CD8-positive, alpha-beta memory T cell (primary cell): ENCODE measurements at regions of chr1 and their contacts with region 1.

Region 1: GRCh38 chr1:110619412-110620249 is 13.5 kb upstream of the KCNA2 start:
- DNase-seq: peak; percentile 87 to 92 (median 87)
- H3K4me3 ChIP-seq: peak overlapping the region; percentile 70
- H3K4me3 Mint-ChIP-seq: peak overlapping the region; percentile 84 to 94 (median 90)
- H3K27ac ChIP-seq: peak overlapping the region; percentile 60
- H3K27ac Mint-ChIP-seq: peak overlapping the region; percentile 51 to 94 (median 90)
- H3K4me1 ChIP-seq: peaks cover 33% of the 10 kb centered on the region
- H3K4me1 Mint-ChIP-seq: peaks cover 33 to 39% (median 37%) of the 10 kb centered on the region in 3 donors
- H3K27me3 ChIP-seq: no peaks in the 10 kb centered on the region
- H3K27me3 Mint-ChIP-seq: peaks cover 0 to 7% of the 10 kb centered on the region in 2 donors

Region 2: GRCh38 chr1:110390692-110391245 is 228.9 kb before region 1 on chr1 and contains the start of gene SLC16A4:
- CTCF ChIA-PET with region 1: no interaction called
- POLR2A ChIA-PET with region 1: no interaction called
- DNase-seq: no peak
- H3K4me3 ChIP-seq: no peak within 1 kb of the TSS
- H3K4me3 Mint-ChIP-seq: no peak within 1 kb of the TSS
- H3K27ac ChIP-seq: no peak within 1 kb of the TSS
- H3K27ac Mint-ChIP-seq: peak within 1 kb of the TSS in 2 of 8 donors; percentile 47 to 48
- H3K4me1 ChIP-seq: no peaks in the 10 kb centered on the region
- H3K4me1 Mint-ChIP-seq: no peaks in the 10 kb centered on the region
- H3K27me3 ChIP-seq: no peaks in the 10 kb centered on the region
- H3K27me3 Mint-ChIP-seq: no peaks in the 10 kb centered on the region
- total RNA-seq, gene SLC16A4: 0.09 to 0.13 TPM

Region 3: DNA sequence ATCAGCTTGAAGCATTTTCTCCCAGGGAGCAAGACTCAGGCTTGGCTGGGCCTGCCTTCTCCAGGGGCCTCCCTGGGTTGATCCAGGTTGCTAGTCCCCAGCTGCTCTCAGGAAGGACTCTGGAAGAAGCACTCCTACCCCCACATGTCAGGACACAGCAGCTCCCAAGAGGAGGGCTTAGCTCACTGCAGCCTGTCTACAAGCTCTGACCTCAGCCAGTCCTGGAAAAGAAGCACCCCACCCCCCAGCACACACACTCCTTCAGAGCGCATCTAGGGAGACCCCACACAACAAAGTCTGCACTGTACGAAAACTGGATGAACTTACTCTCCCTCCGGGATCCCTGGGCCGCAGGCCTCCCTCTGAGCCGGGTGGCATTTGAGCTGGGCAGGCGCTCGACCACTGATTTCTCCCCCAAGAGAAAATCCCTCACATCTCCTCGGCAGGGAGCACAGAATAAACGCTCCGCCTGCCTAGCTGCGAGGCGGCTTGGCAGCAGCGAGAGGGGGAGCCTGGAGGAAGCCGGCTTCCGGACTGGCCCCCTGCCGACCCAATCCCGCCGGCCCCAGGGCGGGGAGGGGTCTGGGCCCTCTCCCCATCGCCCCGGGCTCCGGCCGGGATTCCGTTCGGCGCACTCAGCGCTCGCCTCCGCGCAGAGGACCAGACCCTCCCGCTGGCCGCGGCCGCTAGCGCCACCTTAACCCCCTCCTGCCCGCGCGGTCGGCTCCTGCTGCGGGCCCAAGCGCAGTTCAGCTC is 13.6 kb before region 1 on chr1 and contains the start of gene KCNA2:
- CTCF ChIA-PET with region 1: interaction called, 40 read pairs
- POLR2A ChIA-PET with region 1: interaction called, 12 read pairs
- DNase-seq: no peak
- H3K4me3 ChIP-seq: peak within 1 kb of the TSS; percentile 55
- H3K4me3 Mint-ChIP-seq: peak within 1 kb of the TSS; percentile 73 to 90 (median 83)
- H3K27ac ChIP-seq: no peak within 1 kb of the TSS
- H3K27ac Mint-ChIP-seq: peak within 1 kb of the TSS in 1 of 8 donors; percentile 40
- H3K4me1 ChIP-seq: peaks cover 13% of the 10 kb centered on the region
- H3K4me1 Mint-ChIP-seq: peaks cover 10 to 30% (median 13%) of the 10 kb centered on the region in 3 donors
- H3K27me3 ChIP-seq: peaks cover 40% of the 10 kb centered on the region
- H3K27me3 Mint-ChIP-seq: peaks cover 19 to 59% of the 10 kb centered on the region in 2 donors
- total RNA-seq, gene KCNA2: 0.24 to 0.35 TPM

Region 4: GRCh38 chr1:110645821-110646735 is 26.4 kb after region 1 on chr1:
- CTCF ChIA-PET with region 1: interaction called, 17 read pairs
- POLR2A ChIA-PET with region 1: interaction called, 4 read pairs
- DNase-seq: no peak
- H3K4me3 ChIP-seq: peak overlapping the region; percentile 6
- H3K4me3 Mint-ChIP-seq: peak overlapping the region in 6 of 7 donors; percentile 7 to 56 (median 37)
- H3K27ac ChIP-seq: no peak overlapping the region
- H3K27ac Mint-ChIP-seq: peak overlapping the region in 6 of 8 donors; percentile 8 to 91 (median 74)
- H3K4me1 ChIP-seq: peaks cover 92% of the 10 kb centered on the region
- H3K4me1 Mint-ChIP-seq: peaks cover 33 to 48% (median 41%) of the 10 kb centered on the region in 3 donors
- H3K27me3 ChIP-seq: no peaks in the 10 kb centered on the region
- H3K27me3 Mint-ChIP-seq: no peaks in the 10 kb centered on the region

Region 5: DNA sequence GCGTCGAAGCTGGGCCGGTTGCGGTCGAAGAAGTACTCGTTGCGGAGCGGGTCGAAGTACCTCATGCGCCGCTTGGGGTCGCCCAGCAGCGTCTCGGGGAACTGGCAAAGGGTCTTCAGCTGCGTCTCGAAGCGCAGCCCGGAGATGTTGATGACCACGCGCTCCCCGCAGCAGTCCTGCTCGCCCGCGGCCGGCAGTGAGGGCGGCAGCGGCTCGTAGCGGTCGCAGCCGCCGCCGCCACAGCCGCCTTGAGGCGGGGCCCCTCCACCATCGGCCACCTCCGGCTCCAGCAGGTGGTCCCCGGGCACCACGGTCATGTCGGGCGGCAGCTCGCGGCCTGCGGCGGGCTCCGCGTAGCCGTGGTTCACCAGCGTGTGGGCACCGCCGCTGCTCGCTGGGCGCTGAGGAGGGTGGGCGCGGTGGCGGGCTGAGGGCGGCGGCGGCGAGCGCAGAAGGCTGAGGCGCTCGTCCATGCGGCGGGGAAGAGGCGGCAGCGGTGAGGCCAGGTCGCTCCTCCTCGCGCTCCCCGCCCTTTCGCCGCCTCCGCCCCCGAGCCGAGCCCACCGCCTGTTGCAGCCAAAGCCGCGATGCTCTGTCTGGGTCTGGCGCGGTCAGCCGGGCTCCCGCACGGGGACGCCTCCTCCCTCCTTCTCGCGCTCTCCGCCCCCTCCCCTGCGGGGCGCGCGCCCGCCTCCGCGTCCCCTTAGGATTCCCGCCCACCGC is 54.9 kb after region 1 on chr1 and contains the start of gene KCNA3:
- CTCF ChIA-PET with region 1: interaction called, 25 read pairs
- POLR2A ChIA-PET with region 1: interaction called, 6 read pairs
- DNase-seq: peak; percentile 70 to 87 (median 73)
- H3K4me3 ChIP-seq: peak within 1 kb of the TSS; percentile 90
- H3K4me3 Mint-ChIP-seq: peak within 1 kb of the TSS; percentile 96 to 100 (median 100)
- H3K27ac ChIP-seq: peak within 1 kb of the TSS; percentile 98
- H3K27ac Mint-ChIP-seq: peak within 1 kb of the TSS; percentile 93 to 100 (median 100)
- H3K4me1 ChIP-seq: peaks cover 24% of the 10 kb centered on the region
- H3K4me1 Mint-ChIP-seq: peaks cover 33 to 60% (median 43%) of the 10 kb centered on the region in 3 donors
- H3K27me3 ChIP-seq: no peaks in the 10 kb centered on the region
- H3K27me3 Mint-ChIP-seq: peaks cover 0 to 11% of the 10 kb centered on the region in 2 donors
- total RNA-seq, gene KCNA3: 38.4 to 40.5 TPM

Region 6: DNA sequence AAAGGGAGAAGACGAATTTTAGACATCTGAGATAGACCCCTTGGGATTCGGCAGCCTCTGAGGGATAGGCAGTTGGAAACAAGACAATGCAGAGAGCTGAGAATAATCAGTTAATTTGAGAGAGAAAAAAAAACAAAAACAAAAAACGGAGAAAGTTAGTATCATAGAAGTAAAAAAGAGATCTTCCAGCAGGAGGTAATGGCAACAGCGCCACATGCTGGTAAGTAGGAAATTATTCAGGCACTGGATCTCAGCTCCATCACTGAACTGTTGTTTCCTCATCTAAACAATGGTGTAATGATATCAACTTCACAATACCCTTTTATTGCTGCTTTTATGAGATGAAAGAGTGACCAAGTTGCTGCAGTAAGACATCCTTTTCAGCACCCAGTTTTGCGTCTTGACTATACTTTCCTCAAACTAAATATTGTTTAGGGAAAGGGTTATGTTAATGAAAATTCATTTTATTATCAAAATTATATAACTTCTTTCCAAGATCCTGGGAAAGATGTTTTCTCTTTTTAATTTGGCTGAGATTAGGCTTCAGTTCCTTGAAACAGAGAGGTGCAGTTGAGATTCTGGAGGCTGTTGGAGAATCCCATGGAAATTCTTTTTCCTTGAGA is 146.5 kb after region 1 on chr1:
- CTCF ChIA-PET with region 1: interaction called, 135 read pairs
- POLR2A ChIA-PET with region 1: interaction called, 27 read pairs
- DNase-seq: peak; percentile 24 to 72 (median 57)
- H3K4me3 ChIP-seq: no peak overlapping the region
- H3K4me3 Mint-ChIP-seq: no peak overlapping the region
- H3K27ac ChIP-seq: no peak overlapping the region
- H3K27ac Mint-ChIP-seq: peak overlapping the region in 1 of 8 donors; percentile 58
- H3K4me1 ChIP-seq: no peaks in the 10 kb centered on the region
- H3K4me1 Mint-ChIP-seq: peaks cover 4 to 6% (median 5%) of the 10 kb centered on the region in 3 donors
- H3K27me3 ChIP-seq: no peaks in the 10 kb centered on the region
- H3K27me3 Mint-ChIP-seq: peaks cover 4 to 30% of the 10 kb centered on the region in 2 donors

Region 7: GRCh38 chr1:110780600-110781484 is 161.2 kb after region 1 on chr1:
- CTCF ChIA-PET with region 1: interaction called, 126 read pairs
- POLR2A ChIA-PET with region 1: interaction called, 6 read pairs
- DNase-seq: peak; percentile 44 to 81 (median 72)
- H3K4me3 ChIP-seq: no peak overlapping the region
- H3K4me3 Mint-ChIP-seq: peak overlapping the region in 4 of 7 donors; percentile 12 to 38 (median 22)
- H3K27ac ChIP-seq: no peak overlapping the region
- H3K27ac Mint-ChIP-seq: peak overlapping the region in 3 of 8 donors; percentile 17 to 45 (median 32)
- H3K4me1 ChIP-seq: peaks cover 39% of the 10 kb centered on the region
- H3K4me1 Mint-ChIP-seq: peaks cover 36 to 41% (median 39%) of the 10 kb centered on the region in 3 donors
- H3K27me3 ChIP-seq: no peaks in the 10 kb centered on the region
- H3K27me3 Mint-ChIP-seq: peaks cover 4% of the 10 kb centered on the region in 2 donors